ENCODE measurements at regions of chr11 and their contacts with region 1.

Region 1: DNA sequence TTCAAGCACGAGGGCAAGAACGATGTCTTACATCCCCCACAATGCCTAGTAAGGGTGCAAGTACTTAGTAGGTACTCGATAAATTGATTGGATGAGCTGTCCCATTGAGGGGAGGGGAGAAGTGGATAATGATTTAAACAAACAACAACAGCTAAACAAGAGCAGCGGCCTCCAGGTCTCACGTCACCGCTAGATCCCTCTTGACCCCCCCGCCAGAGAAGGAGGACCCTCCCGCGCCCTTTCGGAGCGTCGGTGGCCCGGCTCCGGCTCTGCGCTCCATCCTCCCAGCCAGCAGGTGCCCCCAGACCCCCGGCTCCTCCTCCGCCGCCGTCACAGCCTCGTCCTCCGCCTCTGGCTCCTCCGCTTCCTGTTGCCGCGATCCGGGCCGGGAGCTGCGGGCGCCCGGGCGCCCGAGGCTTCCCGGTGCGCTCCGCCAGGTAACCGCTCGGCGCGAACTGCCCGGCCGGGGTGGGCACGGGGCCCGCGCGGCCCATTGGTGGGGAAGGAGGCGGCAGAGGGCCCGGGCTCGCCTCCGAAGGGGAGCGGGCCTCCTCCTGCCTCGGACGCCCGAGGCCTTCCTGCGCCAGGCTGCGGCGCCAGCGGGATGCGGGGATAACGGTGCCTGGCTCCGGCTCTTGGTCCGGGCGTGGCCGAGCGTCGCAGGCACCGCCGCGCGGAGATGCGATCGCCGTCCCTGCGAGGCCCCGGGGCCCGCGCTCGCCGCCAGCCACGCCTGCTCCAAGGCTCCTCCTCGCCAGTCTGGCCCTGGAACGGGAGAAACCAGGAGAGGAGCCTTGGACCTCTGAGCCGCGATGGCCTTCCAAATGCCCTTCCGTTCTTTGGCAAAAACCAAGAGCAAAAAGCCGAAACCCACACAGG is at the start of gene TLCD5:
- DNase-seq: peak; percentile 63 to 75
- ATAC-seq: peak; percentile 60 to 76 (median 72)
- H3K4me3 ChIP-seq: peak within 1 kb of the TSS; percentile 77
- H3K27ac ChIP-seq: peak within 1 kb of the TSS; percentile 82
- H3K4me1 ChIP-seq: peaks cover 5% of the 10 kb centered on the region
- H3K27me3 ChIP-seq: peaks cover 2 to 19% (median 3%) of the 10 kb centered on the region in 3 donors
- CTCF ChIP-seq: no peak
- total RNA-seq, gene TLCD5: 0.53 to 2.5 (median 1.4) TPM

Region 2: GRCh38 chr11:120272303-120272702 is 52.9 kb before region 1 on chr11:
- intact Hi-C with region 1: no loop called
- DNase-seq: no peak
- ATAC-seq: no peak
- H3K4me3 ChIP-seq: no peak overlapping the region
- H3K27ac ChIP-seq: no peak overlapping the region
- H3K4me1 ChIP-seq: no peaks in the 10 kb centered on the region
- H3K27me3 ChIP-seq: peaks cover 0 to 9% (median 4%) of the 10 kb centered on the region in 3 donors
- CTCF ChIP-seq: no peak

Region 3: DNA sequence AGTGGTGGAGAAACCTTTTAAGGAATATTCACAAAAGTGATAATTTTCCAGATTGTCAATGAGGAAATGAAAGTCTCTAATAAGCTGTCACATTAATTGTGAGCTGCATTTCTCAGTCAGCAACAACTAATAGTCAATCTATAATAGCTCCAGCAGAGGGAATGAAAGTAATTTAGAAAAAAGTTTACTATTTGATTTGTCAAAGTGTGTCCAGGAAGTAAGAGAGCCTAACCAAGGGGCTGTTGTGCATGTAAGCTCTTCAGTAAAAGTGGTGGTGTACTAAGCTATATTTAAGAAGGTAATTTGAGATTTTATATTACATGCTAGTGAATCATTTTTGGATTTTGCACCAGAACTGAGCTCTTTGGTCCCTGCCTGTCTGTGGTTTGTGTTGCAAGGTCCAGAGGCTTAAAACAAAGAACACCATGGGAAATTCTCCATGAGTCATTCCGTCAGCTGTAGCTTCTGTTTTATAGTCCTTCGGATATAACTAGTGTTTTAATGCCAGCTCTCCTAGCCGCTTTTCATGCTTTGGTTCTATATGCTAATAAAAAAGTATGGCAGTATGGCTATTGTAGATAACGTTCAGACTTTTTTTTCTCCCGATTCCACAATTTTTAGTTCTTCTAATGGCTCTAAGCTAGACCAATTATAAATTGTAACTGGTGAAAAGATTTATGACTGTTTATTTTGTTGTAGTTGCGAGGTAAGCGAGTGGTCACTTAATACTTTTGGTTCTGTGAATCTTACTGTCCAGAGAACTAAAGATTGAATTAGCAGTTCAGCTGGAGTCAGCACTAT is 75.6 kb after region 1 on chr11:
- intact Hi-C with region 1: no loop called
- DNase-seq: no peak
- ATAC-seq: peak; percentile 90 to 96 (median 94)
- H3K4me3 ChIP-seq: peak overlapping the region; percentile 56
- H3K27ac ChIP-seq: peak overlapping the region; percentile 89
- H3K4me1 ChIP-seq: peaks cover 73% of the 10 kb centered on the region
- H3K27me3 ChIP-seq: no peaks in the 10 kb centered on the region
- CTCF ChIP-seq: no peak

Region 4: GRCh38 chr11:120500414-120501071 is 175.4 kb after region 1 on chr11:
- intact Hi-C with region 1: no loop called
- DNase-seq: peak in 1 of 2 donors; percentile 55
- ATAC-seq: no peak
- H3K4me3 ChIP-seq: no peak overlapping the region
- H3K27ac ChIP-seq: no peak overlapping the region
- H3K4me1 ChIP-seq: no peaks in the 10 kb centered on the region
- H3K27me3 ChIP-seq: peaks cover 0 to 47% (median 0%) of the 10 kb centered on the region in 3 donors
- CTCF ChIP-seq: no peak

Region 5: DNA sequence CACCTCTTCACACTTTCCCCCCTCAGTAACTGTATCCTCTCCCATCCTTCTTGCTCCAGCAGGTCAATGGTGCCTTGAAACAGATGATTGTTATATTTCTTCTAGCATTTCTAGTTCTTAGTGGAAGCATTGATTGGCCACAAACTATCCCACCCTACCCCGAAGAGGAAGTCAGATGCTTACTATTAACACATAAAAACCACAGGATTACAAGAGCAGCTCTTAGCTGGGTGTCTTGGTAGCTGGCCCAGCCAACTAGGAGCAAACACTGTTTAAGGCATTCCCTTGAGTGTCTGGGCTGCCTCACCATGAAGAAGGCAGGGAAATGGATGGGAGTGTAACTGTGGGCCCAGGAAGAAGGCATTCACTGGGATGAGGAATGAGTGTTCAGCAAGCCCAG is 363.0 kb after region 1 on chr11:
- intact Hi-C with region 1: loop called in 1 of 2 experiments (anchors 5 kb)
- DNase-seq: no peak
- ATAC-seq: no peak
- H3K4me3 ChIP-seq: no peak overlapping the region
- H3K27ac ChIP-seq: no peak overlapping the region
- H3K4me1 ChIP-seq: no peaks in the 10 kb centered on the region
- H3K27me3 ChIP-seq: peaks cover 0 to 30% (median 1%) of the 10 kb centered on the region in 3 donors
- CTCF ChIP-seq: no peak

Measured in psoas muscle (tissue), 8 donors.